Common myeloid progenitor, CD34-positive (primary cell): ENCODE measurements at regions of chr17 and their contacts with region 1.

Region 1: GRCh38 chr17:65294179-65294720 is 157.1 kb downstream of the RGS9 start:
- DNase-seq: peak; percentile 43 to 71 (median 67)
- H3K4me3 ChIP-seq: no peak overlapping the region
- H3K27ac ChIP-seq: no peak overlapping the region
- H3K4me1 ChIP-seq: peaks cover 0 to 1% (median 0%) of the 10 kb centered on the region in 4 experiments
- H3K27me3 ChIP-seq: peaks cover 0 to 29% (median 4%) of the 10 kb centered on the region in 5 experiments

Region 2: DNA sequence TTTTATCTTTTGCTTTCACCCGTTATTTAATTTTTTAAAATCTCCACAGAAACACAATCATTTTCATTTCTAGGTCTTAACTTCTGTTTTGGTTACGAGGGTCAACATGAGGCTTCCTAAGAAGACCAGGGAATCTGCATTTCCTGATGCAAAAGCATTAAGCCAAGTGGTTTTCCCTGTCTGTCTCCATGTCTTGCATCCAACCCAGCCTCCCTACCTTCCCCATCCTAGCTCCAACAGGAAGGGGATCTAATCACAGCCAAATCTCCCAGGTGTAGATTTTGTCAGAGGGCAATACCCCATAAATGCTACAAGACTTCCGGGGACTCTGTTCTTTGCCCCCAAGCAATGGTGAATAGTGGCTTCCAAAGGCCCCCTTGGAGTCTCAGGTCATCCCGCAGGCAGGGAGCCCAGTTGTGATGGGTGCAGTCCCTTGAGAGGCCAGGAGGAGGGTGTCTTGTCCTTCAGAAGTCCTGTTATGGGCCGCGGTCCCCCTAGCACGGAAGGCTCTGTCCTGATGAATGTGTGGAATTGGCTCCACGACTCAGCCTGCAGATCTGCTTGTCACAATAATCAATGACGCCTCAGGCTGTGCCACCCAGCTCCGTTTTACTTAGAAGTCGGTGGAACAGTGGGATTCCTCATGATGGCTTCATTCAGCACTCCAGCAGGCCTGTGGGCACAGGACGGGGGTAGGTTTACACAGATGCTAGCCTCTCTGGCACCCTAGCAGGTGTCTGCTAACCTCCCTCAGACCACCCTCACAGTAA is 16.0 kb before region 1 on chr17:
- CTCF ChIA-PET with region 1: interaction called, 11 read pairs
- POLR2A ChIA-PET with region 1: no interaction called
- DNase-seq: peak; percentile 43 to 56 (median 49)
- H3K4me3 ChIP-seq: no peak overlapping the region
- H3K27ac ChIP-seq: no peak overlapping the region
- H3K4me1 ChIP-seq: peaks cover 0 to 9% (median 5%) of the 10 kb centered on the region in 4 experiments
- H3K27me3 ChIP-seq: peaks cover 0 to 29% (median 8%) of the 10 kb centered on the region in 5 experiments

Region 3: GRCh38 chr17:65323049-65323448 is 28.8 kb after region 1 on chr17:
- CTCF ChIA-PET with region 1: no interaction called
- POLR2A ChIA-PET with region 1: no interaction called
- DNase-seq: no peak
- H3K4me3 ChIP-seq: no peak overlapping the region
- H3K27ac ChIP-seq: no peak overlapping the region
- H3K4me1 ChIP-seq: no peaks in the 10 kb centered on the region
- H3K27me3 ChIP-seq: peaks cover 0 to 10% (median 0%) of the 10 kb centered on the region in 5 experiments

Region 4: GRCh38 chr17:65345261-65346005 is 51.2 kb after region 1 on chr17:
- CTCF ChIA-PET with region 1: no interaction called
- POLR2A ChIA-PET with region 1: no interaction called
- DNase-seq: no peak
- H3K4me3 ChIP-seq: no peak overlapping the region
- H3K27ac ChIP-seq: no peak overlapping the region
- H3K4me1 ChIP-seq: no peaks in the 10 kb centered on the region
- H3K27me3 ChIP-seq: peaks cover 0 to 8% (median 7%) of the 10 kb centered on the region in 5 experiments

Region 5: GRCh38 chr17:66165513-66166123 is 871.4 kb after region 1 on chr17:
- CTCF ChIA-PET with region 1: interaction called, 23 read pairs
- POLR2A ChIA-PET with region 1: no interaction called
- DNase-seq: peak; percentile 54 to 71 (median 59)
- H3K4me3 ChIP-seq: no peak overlapping the region
- H3K27ac ChIP-seq: no peak overlapping the region
- H3K4me1 ChIP-seq: no peaks in the 10 kb centered on the region
- H3K27me3 ChIP-seq: no peaks in the 10 kb centered on the region